ENCODE measurements at regions of chr2 and their contacts with region 1.

Region 1: GRCh38 chr2:64144057-64145013 is at the start of gene PELI1:
- DNase-seq: peak; percentile 95
- ATAC-seq: peak; percentile 99
- total RNA-seq, gene PELI1: 9.1 TPM

Region 2: GRCh38 chr2:64228126-64228678 is 83.9 kb after region 1 on chr2:
- intact Hi-C with region 1: loop called (anchors 10 kb)
- DNase-seq: peak; percentile 93
- ATAC-seq: peak; percentile 98